HEK293 (cell line): ENCODE measurements at regions of chr6 and their contacts with region 1.

Region 1: GRCh38 chr6:166775180-166776081 is 148.4 kb upstream of the RPS6KA2 start:
- H3K4me3 ChIP-seq: no peak overlapping the region
- H3K27ac ChIP-seq: no peak overlapping the region
- H3K4me1 ChIP-seq: no peaks in the 10 kb centered on the region
- CTCF ChIP-seq: peak; percentile 27; the same call in 1 of the 2 replicates

Region 2: GRCh38 chr6:166466178-166467122 is 309.0 kb before region 1 on chr6:
- CTCF ChIA-PET with region 1: no interaction called
- POLR2A ChIA-PET with region 1: no interaction called
- H3K4me3 ChIP-seq: no peak overlapping the region
- H3K27ac ChIP-seq: no peak overlapping the region
- H3K4me1 ChIP-seq: no peaks in the 10 kb centered on the region
- CTCF ChIP-seq: no peak

Region 3: DNA sequence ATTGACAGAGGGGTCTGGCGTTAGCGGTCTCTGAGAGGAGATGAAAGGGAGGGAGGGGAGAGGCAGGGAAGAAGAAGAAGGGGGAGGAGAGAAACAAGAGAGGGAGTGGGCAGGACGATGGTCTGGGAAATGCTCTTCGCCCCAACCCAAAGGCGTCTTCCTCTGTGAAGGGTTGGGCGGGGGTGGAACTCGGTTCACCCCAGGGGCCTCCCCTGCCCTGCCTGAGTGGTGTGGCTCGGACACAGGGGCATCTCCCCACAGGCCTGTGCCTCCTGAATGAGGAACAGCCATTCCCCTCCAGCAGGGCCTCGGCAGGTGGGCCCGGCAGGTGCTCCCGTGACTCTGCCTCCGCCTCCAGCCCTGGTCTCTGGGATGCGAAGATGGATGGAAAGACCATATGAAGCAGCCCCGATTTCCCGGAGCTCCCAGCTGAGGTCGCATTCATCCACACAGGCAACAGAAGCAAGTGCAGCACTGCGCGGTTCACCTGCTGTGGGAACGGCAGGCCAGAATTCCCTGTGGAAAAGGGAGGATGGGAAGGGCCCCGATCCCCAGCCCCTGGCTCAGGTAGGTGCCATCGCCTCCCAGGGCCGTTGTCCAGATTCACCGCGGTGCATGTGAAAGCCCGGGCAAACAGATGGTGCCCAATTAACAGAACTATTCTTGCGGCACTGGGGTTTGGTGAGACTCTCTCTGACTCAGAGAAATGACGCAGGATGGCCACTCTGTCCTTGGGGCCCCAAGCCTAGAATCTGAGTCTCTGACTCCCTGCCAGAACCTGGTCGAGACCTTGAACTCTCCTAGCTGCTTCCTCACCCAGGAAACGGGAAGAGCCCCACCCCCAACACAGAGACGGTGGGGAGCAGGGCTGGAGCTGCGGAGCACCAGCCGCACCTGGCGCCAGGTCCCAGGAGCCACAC is 118.9 kb before region 1 on chr6:
- CTCF ChIA-PET with region 1: no interaction called
- POLR2A ChIA-PET with region 1: no interaction called
- H3K4me3 ChIP-seq: no peak overlapping the region
- H3K27ac ChIP-seq: no peak overlapping the region
- H3K4me1 ChIP-seq: no peaks in the 10 kb centered on the region
- CTCF ChIP-seq: no peak

Region 4: GRCh38 chr6:166747644-166748620 is 27.5 kb before region 1 on chr6:
- CTCF ChIA-PET with region 1: interaction called, 10 read pairs
- POLR2A ChIA-PET with region 1: no interaction called
- H3K4me3 ChIP-seq: no peak overlapping the region
- H3K27ac ChIP-seq: no peak overlapping the region
- H3K4me1 ChIP-seq: no peaks in the 10 kb centered on the region
- CTCF ChIP-seq: no peak

Region 5: DNA sequence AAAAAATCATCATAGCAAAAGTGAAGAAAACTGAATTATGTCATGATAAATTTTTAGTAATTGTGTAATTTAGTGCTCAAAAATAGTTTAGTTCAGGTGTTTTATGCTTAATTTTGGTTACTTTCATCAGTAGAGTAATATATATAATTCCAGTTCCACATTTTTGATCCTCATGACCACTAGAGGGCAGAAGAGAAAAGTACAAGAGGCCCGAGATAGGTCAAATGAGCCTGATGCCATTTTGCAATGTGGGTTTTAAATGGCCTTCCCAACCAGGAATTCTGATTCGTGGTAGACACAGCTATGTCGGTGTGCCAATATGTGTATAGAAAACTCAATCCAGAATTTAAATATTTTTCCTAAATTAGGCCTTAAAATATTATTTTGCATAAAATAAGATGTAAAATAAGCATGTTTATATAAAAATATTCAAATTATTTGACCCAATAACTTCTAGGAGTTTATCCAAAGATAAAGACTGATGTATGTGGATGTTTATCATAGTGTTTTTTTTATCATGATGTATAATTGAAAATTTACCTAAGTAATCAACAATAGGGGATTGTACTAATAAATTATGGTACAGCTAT is 11.4 kb after region 1 on chr6:
- CTCF ChIA-PET with region 1: interaction called, 13 read pairs
- POLR2A ChIA-PET with region 1: no interaction called
- H3K4me3 ChIP-seq: no peak overlapping the region
- H3K27ac ChIP-seq: no peak overlapping the region
- H3K4me1 ChIP-seq: no peaks in the 10 kb centered on the region
- CTCF ChIP-seq: no peak

Region 6: GRCh38 chr6:166989427-166990032 is 214.1 kb after region 1 on chr6:
- CTCF ChIA-PET with region 1: interaction called, 33 read pairs
- POLR2A ChIA-PET with region 1: no interaction called
- H3K4me3 ChIP-seq: no peak overlapping the region
- H3K27ac ChIP-seq: no peak overlapping the region
- H3K4me1 ChIP-seq: no peaks in the 10 kb centered on the region
- CTCF ChIP-seq: 0 out of 2 replicates have a peak, but pooled peaks have one; percentile 20